ENCODE measurements at regions of chr12 and their contacts with region 1.

Region 1: DNA sequence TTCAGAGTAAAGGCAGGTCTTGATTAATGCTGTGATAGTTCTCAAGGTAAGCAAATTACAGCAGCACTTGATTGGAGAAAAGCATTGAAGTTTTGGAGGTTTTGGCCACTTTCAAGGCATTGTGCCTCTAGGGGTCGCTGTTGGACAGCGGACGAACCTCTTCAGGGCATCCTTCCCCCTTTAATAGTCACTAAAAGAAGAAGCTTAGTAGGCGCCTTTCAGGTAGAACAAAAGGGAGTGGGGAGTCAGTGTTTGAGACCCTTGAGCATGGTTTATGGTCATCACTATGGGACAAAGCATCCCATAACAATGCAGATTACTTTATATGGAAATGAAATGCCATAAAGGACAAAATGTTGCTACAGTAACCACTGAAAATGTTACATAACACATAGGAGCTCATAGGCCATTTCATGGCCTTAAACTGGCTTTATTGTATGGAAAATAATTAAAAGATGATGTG is 199.5 kb upstream of the DCN start:
- DNase-seq: peak; percentile 63 to 76
- H3K4me3 ChIP-seq: peak overlapping the region; percentile 36 to 51 (median 44)
- H3K27ac ChIP-seq: peak overlapping the region; percentile 74 to 81
- H3K4me1 ChIP-seq: no peaks in the 10 kb centered on the region
- H3K27me3 ChIP-seq: no peaks in the 10 kb centered on the region
- CTCF ChIP-seq: peak; percentile 75 to 90 (median 85)
- POLR2A ChIP-seq: no peak

Region 2: DNA sequence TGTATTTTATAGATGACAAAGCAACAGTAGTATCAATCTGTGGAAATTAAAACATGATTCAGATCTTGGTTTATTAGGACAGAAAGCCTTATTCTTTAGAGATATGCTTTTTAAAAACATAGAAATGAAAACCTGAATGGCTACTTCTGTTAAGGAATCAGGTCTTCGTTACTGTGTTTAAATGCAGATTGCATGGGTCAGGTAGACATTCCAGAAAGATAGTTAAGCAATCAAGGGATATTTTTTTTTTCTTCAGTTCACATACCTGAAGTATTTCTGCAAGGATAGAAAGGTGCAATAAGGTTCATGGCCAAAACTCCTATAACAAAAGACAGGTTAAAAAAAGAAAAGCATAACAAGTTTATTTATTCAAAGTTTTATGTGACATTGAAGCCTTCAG is 1004.9 kb before region 1 on chr12:
- intact Hi-C with region 1: no loop called
- DNase-seq: no peak
- H3K4me3 ChIP-seq: no peak overlapping the region
- H3K27ac ChIP-seq: no peak overlapping the region
- H3K4me1 ChIP-seq: no peaks in the 10 kb centered on the region
- H3K27me3 ChIP-seq: no peaks in the 10 kb centered on the region
- CTCF ChIP-seq: no peak
- POLR2A ChIP-seq: no peak

Region 3: GRCh38 chr12:91432089-91432488 is 50.0 kb after region 1 on chr12:
- intact Hi-C with region 1: no loop called
- DNase-seq: no peak
- H3K4me3 ChIP-seq: no peak overlapping the region
- H3K27ac ChIP-seq: no peak overlapping the region
- H3K4me1 ChIP-seq: no peaks in the 10 kb centered on the region
- H3K27me3 ChIP-seq: no peaks in the 10 kb centered on the region
- CTCF ChIP-seq: no peak
- POLR2A ChIP-seq: no peak

Region 4: DNA sequence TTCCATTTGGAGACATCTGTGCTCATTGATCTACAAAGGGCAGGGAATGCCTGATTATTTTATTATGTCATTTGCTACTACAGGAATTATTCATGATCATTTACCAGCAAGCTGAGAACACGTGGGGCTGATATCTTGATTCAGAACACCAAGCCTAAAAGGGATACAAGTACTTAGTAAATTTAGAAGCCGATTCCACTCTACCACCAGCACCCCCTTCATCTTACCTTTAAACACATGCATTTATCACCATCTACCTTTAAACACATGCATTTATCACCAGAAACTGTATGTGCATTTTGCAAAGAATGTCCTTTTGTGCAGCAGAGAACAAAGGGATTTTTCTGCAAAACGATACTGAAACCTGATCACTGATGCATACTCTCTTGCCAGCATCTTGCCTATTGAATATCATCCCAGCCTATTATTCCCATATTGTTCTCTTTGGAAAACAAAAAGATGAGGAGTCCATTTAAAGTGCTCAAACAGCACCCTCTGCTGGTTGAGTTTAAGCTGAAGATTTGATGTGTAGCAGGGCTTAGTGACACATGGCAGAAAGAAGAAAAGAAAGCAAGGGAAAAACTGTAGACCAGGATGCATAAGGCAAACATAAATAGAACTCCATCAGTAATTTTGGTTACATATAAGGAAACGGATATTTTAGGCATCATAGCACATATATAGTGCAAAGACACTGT is 1188.1 kb after region 1 on chr12:
- intact Hi-C with region 1: loop called (anchors 10 kb)
- DNase-seq: peak in 1 of 2 donors; percentile 59
- H3K4me3 ChIP-seq: peak overlapping the region in 1 of 3 donors; percentile 24
- H3K27ac ChIP-seq: peak overlapping the region in 1 of 2 donors; percentile 7
- H3K4me1 ChIP-seq: no peaks in the 10 kb centered on the region
- H3K27me3 ChIP-seq: no peaks in the 10 kb centered on the region
- CTCF ChIP-seq: peak; percentile 86 to 91 (median 88)
- POLR2A ChIP-seq: no peak

Measured in breast epithelium (tissue), 4 donors.